Calu3 (cell line): ENCODE measurements at regions of chr9 and their contacts with region 1.

Region 1: GRCh38 chr9:111131211-111131610 is 92.9 kb upstream of the LPAR1 start:
- DNase-seq: no peak
- H3K4me3 Mint-ChIP-seq: no peak overlapping the region
- H3K27ac Mint-ChIP-seq: no peak overlapping the region
- H3K4me1 Mint-ChIP-seq: no peaks in the 10 kb centered on the region
- H3K27me3 Mint-ChIP-seq: no peaks in the 10 kb centered on the region
- CTCF ChIP-seq: no peak

Region 2: GRCh38 chr9:111231802-111232580 is 100.8 kb after region 1 on chr9:
- CTCF ChIA-PET with region 1: interaction called, 10 read pairs
- intact Hi-C with region 1: no loop called
- DNase-seq: no peak
- H3K4me3 Mint-ChIP-seq: no peak overlapping the region
- H3K27ac Mint-ChIP-seq: no peak overlapping the region
- H3K4me1 Mint-ChIP-seq: no peaks in the 10 kb centered on the region
- H3K27me3 Mint-ChIP-seq: no peaks in the 10 kb centered on the region
- CTCF ChIP-seq: no peak